Ascending aorta (tissue), 2 donors: ENCODE measurements at regions of chrX and their contacts with region 1.

Region 1: DNA sequence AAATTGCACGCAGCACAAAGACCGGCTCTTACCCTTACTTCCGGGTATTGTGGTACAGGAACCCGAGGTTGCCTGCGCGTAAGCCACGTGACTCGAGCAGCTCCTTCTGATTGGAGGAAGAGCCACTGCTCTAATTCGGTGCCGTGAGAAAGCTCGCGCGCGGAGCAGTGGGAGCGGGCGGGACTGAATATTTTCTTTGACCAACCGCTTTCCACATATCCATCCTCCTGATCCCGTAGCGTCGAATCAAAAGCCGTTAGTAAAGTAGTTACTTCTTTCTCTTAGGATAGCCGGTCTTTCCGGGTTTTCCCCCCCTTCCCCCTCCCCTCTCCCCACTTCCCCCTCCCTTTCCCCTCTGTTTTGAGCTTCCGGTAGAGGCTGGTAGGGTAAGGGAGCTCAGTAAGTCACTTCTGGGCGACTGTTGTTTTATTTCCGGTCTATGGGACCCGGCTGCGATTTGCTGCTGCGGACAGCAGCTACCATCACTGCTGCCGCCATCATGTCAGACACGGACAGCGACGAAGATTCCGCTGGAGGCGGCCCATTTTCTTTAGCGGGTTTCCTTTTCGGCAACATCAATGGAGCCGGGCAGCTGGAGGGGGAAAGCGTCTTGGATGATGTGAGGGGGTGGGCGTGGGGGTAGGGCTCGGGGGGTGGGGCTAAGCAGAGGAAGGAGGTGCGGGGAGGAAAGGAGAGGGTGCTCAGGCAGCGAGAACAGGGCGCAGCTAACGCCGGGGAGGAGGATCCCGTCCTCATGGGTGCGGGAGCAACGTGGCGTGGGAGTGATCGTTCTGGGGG is at the start of gene TAF1:
- DNase-seq: peak; percentile 87 to 97
- H3K4me3 ChIP-seq: peak within 1 kb of the TSS; percentile 58 to 82
- H3K27ac ChIP-seq: peak within 1 kb of the TSS; percentile 87 to 95
- H3K4me1 ChIP-seq: peaks cover 0 to 5% of the 10 kb centered on the region in 2 donors
- H3K27me3 ChIP-seq: no peaks in the 10 kb centered on the region
- CTCF ChIP-seq: no peak
- total RNA-seq, gene TAF1: 63.2 TPM

Region 2: GRCh38 chrX:71254092-71254941 is 111.8 kb before region 1 on chrX and contains the start of gene ZMYM3:
- intact Hi-C with region 1: loop called (anchors 1 kb)
- DNase-seq: peak; percentile 57 to 89
- H3K4me3 ChIP-seq: peak within 1 kb of the TSS; percentile 51 to 73
- H3K27ac ChIP-seq: peak within 1 kb of the TSS; percentile 77 to 91
- H3K4me1 ChIP-seq: peaks cover 2 to 8% of the 10 kb centered on the region in 2 donors
- H3K27me3 ChIP-seq: no peaks in the 10 kb centered on the region
- CTCF ChIP-seq: no peak
- total RNA-seq, gene ZMYM3: 12.5 TPM

Region 3: GRCh38 chrX:71301195-71301924 is 64.7 kb before region 1 on chrX and contains the start of gene ITGB1BP2:
- intact Hi-C with region 1: loop called (anchors 5 kb)
- DNase-seq: peak in 1 of 2 donors; percentile 66
- H3K4me3 ChIP-seq: peak within 1 kb of the TSS; percentile 21 to 63
- H3K27ac ChIP-seq: peak within 1 kb of the TSS; percentile 58 to 70
- H3K4me1 ChIP-seq: no peaks in the 10 kb centered on the region
- H3K27me3 ChIP-seq: no peaks in the 10 kb centered on the region
- CTCF ChIP-seq: no peak
- total RNA-seq, gene ITGB1BP2: not detected

Region 4: GRCh38 chrX:71550578-71550977 is 184.5 kb after region 1 on chrX:
- intact Hi-C with region 1: no loop called
- DNase-seq: no peak
- H3K4me3 ChIP-seq: no peak overlapping the region
- H3K27ac ChIP-seq: no peak overlapping the region
- H3K4me1 ChIP-seq: no peaks in the 10 kb centered on the region
- H3K27me3 ChIP-seq: no peaks in the 10 kb centered on the region
- CTCF ChIP-seq: no peak